H1 (cell line): ENCODE measurements at regions of chr11 and their contacts with region 1.

Region 1: GRCh38 chr11:69950120-69950519 is 128.0 kb upstream of the ANO1 start:
- DNase-seq: peak; percentile 60 to 95
- H3K4me3 ChIP-seq: no peak overlapping the region
- H3K27ac ChIP-seq: no peak overlapping the region
- H3K4me1 ChIP-seq: peaks cover 4 to 16% (median 9%) of the 10 kb centered on the region in 4 experiments; a peak in 6 of 7 replicates
- H3K27me3 ChIP-seq: no peaks in the 10 kb centered on the region; a peak in 1 of 7 replicates
- CTCF ChIP-seq: peak; percentile 95 to 100 (median 100)
- EP300 ChIP-seq: no peak
- POLR2A ChIP-seq: no peak
- RAD21 ChIP-seq: peak; percentile 96 to 98

Region 2: GRCh38 chr11:69909561-69910496 is 40.3 kb before region 1 on chr11:
- CTCF ChIA-PET with region 1: interaction called, 36 read pairs
- POLR2A ChIA-PET with region 1: no interaction called
- DNase-seq: peak in 1 of 2 experiments; percentile 77
- H3K4me3 ChIP-seq: no peak overlapping the region
- H3K27ac ChIP-seq: no peak overlapping the region
- H3K4me1 ChIP-seq: peaks cover 0 to 3% (median 0%) of the 10 kb centered on the region in 4 experiments; a peak in 2 of 7 replicates
- H3K27me3 ChIP-seq: no peaks in the 10 kb centered on the region; a peak in 1 of 7 replicates
- CTCF ChIP-seq: peak; percentile 64 to 82 (median 67); a peak in 3 of 4 replicates
- EP300 ChIP-seq: no peak
- POLR2A ChIP-seq: no peak
- RAD21 ChIP-seq: peak; percentile 40 to 55; a peak in 3 of 4 replicates

Region 3: GRCh38 chr11:69992943-69993694 is 43.0 kb after region 1 on chr11:
- CTCF ChIA-PET with region 1: interaction called, 18 read pairs
- POLR2A ChIA-PET with region 1: no interaction called
- DNase-seq: no peak
- H3K4me3 ChIP-seq: no peak overlapping the region
- H3K27ac ChIP-seq: no peak overlapping the region
- H3K4me1 ChIP-seq: no peaks in the 10 kb centered on the region
- H3K27me3 ChIP-seq: peaks cover 1 to 19% (median 10%) of the 10 kb centered on the region in 4 experiments; a peak in 6 of 7 replicates
- CTCF ChIP-seq: no peak
- EP300 ChIP-seq: no peak
- POLR2A ChIP-seq: no peak
- RAD21 ChIP-seq: no peak

Region 4: GRCh38 chr11:70073871-70074371 is 123.8 kb after region 1 on chr11:
- CTCF ChIA-PET with region 1: interaction called, 103 read pairs
- POLR2A ChIA-PET with region 1: interaction called, 3 read pairs
- DNase-seq: no peak
- H3K4me3 ChIP-seq: peak overlapping the region in 1 of 4 experiments; percentile 33; a peak in 1 of 8 replicates
- H3K27ac ChIP-seq: no peak overlapping the region
- H3K4me1 ChIP-seq: peaks cover 8 to 41% (median 20%) of the 10 kb centered on the region in 4 experiments
- H3K27me3 ChIP-seq: peaks cover 20 to 46% (median 37%) of the 10 kb centered on the region in 4 experiments
- CTCF ChIP-seq: no peak
- EP300 ChIP-seq: no peak
- POLR2A ChIP-seq: no peak
- RAD21 ChIP-seq: no peak

Region 5: DNA sequence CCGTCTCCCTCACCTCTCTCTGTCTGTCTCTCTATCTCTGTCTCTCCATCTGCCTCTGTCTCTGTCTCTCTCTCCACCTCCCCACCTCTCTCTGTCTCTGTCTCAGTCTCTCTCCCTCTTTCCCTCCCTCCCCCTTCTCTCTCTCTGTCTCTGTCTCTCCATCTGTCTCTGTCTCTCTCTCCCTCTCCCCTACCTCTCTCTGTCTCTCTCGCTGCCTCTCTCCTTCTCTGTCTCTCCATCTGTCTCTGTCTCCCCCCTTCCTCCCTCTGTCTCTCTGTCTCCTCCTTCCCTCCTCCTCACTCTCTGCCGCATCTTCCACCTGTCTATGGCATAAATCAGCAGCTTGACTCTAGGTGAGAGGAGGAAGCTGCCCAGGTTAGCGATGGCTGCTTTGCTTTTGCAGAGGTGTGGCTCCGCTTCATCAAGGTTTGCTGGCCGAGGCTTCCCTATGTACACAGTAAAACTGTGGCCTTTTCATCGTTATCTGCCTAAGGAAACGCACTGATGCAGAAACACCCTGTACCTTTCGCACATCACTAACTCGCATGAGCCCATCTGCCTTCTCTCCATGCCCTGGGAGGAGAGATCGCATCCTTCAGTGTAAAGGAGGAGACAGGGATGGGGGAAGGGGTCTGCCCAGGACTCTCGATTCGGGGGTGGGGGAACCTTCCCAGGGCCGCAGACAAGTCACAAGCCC is 172.5 kb after region 1 on chr11:
- CTCF ChIA-PET with region 1: interaction called, 14 read pairs
- POLR2A ChIA-PET with region 1: no interaction called
- DNase-seq: no peak
- H3K4me3 ChIP-seq: no peak overlapping the region
- H3K27ac ChIP-seq: no peak overlapping the region
- H3K4me1 ChIP-seq: peaks cover 0 to 11% (median 4%) of the 10 kb centered on the region in 4 experiments; a peak in 6 of 7 replicates
- H3K27me3 ChIP-seq: no peaks in the 10 kb centered on the region; a peak in 1 of 7 replicates
- CTCF ChIP-seq: no peak
- EP300 ChIP-seq: no peak
- POLR2A ChIP-seq: no peak
- RAD21 ChIP-seq: no peak

Region 6: DNA sequence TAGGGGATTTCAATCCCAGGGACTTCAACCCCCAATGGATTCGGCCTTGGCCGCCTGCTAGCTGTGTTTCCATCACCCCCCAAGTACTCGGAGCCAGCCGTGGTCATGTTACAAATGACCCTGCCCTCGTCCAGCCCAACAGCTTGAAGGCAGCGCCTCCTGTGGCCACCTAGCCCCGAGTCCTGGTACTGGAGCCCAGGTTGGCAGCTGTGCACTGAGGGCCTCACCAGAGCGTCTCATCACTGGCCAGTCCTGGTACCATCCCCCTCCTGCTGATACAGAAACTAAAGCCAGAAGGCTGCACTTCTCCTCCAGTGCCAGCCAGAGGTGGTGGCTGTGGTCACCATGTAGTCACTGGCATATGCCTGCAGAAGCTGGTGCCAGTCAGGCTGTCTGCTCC is 208.1 kb after region 1 on chr11:
- CTCF ChIA-PET with region 1: interaction called, 11 read pairs
- POLR2A ChIA-PET with region 1: no interaction called
- DNase-seq: peak; percentile 19 to 80
- H3K4me3 ChIP-seq: no peak overlapping the region
- H3K27ac ChIP-seq: no peak overlapping the region
- H3K4me1 ChIP-seq: no peaks in the 10 kb centered on the region; a peak in 2 of 7 replicates
- H3K27me3 ChIP-seq: no peaks in the 10 kb centered on the region; a peak in 1 of 7 replicates
- CTCF ChIP-seq: peak; percentile 85 to 91 (median 88)
- EP300 ChIP-seq: no peak
- POLR2A ChIP-seq: no peak
- RAD21 ChIP-seq: peak; percentile 86 to 88

Region 7: DNA sequence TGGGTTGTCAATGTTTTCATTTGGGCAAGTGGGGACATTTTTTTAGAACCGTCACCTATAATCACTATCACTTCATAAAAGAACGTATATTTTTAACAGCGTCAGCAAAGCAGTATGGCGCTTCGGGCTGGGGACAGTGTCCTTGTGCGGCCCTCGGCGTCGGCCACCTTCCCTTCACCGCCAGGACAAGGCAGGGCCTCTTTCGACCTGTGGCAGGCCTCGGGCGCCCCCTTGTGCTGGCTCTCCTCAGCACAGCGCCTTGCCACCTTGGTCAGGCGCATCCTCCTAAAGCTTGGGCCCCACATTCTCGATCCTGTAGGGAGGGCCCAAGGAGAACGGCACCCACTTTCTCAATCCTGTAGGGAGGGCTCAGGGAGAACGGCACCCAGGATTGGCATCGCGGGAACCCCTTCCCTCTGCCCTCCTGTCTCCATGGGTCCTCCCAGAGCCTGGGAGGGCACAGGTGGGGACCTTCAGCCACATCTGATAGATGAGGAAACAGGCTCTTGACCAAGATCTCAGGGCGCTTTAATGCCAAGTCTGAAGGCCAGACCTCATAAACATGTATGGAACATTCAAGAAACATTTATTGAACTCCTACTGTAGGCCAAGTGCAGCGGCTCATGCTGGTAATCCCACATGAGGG is 241.5 kb after region 1 on chr11:
- CTCF ChIA-PET with region 1: interaction called, 62 read pairs
- POLR2A ChIA-PET with region 1: interaction called, 3 read pairs
- DNase-seq: peak; percentile 59 to 97
- H3K4me3 ChIP-seq: no peak overlapping the region
- H3K27ac ChIP-seq: no peak overlapping the region
- H3K4me1 ChIP-seq: no peaks in the 10 kb centered on the region
- H3K27me3 ChIP-seq: no peaks in the 10 kb centered on the region
- CTCF ChIP-seq: peak; percentile 94 to 99 (median 98)
- EP300 ChIP-seq: no peak
- POLR2A ChIP-seq: no peak
- RAD21 ChIP-seq: peak; percentile 98 to 100